IMR-90 (cell line): ENCODE measurements at regions of chr14 and their contacts with region 1.

Region 1: GRCh38 chr14:61553725-61554641 is 141.3 kb upstream of the HIF1A start:
- DNase-seq: peak; percentile 98
- ATAC-seq: peak; percentile 88
- H3K4me3 ChIP-seq: no peak overlapping the region
- H3K27ac ChIP-seq: peak overlapping the region; percentile 93
- H3K4me1 ChIP-seq: peaks cover 30% of the 10 kb centered on the region
- H3K27me3 ChIP-seq: no peaks in the 10 kb centered on the region
- CTCF ChIP-seq: no peak
- POLR2A ChIP-seq: no peak
- RAD21 ChIP-seq: peak; percentile 38

Region 2: GRCh38 chr14:60915781-60916180 is 638.2 kb before region 1 on chr14:
- CTCF ChIA-PET with region 1: no interaction called
- POLR2A ChIA-PET with region 1: no interaction called
- dilution Hi-C with region 1: no loop called
- in situ Hi-C with region 1: no loop called
- intact Hi-C with region 1: no loop called
- DNase-seq: peak; percentile 5
- ATAC-seq: peak; percentile 49; the same call in 1 of the 2 replicates
- H3K4me3 ChIP-seq: no peak overlapping the region
- H3K27ac ChIP-seq: no peak overlapping the region
- H3K4me1 ChIP-seq: no peaks in the 10 kb centered on the region
- H3K27me3 ChIP-seq: no peaks in the 10 kb centered on the region
- CTCF ChIP-seq: no peak
- POLR2A ChIP-seq: no peak
- RAD21 ChIP-seq: no peak

Region 3: DNA sequence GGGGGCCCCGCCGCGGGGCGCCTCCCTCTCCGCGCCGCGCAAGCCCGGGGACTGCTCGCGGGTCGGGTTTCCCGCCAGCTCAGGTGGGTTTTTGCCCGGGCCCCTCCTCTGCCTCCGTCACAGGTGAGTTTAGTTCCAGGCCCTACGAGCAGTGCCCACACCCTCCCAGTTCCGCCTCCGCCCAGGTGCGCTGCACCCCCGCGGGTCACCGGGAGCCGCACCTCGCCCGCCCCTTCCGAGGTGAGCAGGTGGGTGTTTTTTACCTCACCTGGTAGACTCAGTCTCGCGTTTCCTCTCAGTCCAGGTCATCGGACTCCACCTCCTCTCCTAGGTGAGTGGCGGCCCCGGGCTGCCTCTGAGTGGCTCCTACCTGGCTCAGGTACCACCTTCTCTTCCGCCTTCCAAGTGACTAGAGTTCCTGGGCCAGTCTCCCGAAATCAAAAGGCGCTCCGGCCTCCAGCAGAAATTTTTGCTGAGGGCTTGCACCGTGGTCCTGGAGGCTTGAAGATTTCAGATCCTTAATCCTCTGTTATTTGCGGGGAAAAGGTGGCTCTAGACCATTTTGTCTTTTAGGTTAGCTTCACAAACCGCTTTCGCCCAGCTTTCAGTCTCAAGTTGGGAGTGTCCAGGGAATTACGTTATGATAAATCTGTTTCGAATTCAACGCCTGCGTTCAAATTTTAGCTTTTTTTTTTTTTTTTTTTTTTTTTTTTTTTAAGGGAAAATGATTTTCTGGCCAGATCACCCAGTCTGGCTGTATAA is 272.6 kb before region 1 on chr14 and contains the start of gene TMEM30B:
- CTCF ChIA-PET with region 1: no interaction called
- POLR2A ChIA-PET with region 1: no interaction called
- dilution Hi-C with region 1: no loop called
- in situ Hi-C with region 1: no loop called
- intact Hi-C with region 1: no loop called
- DNase-seq: no peak
- ATAC-seq: no peak
- H3K4me3 ChIP-seq: peak within 1 kb of the TSS; percentile 22
- H3K27ac ChIP-seq: no peak within 1 kb of the TSS
- H3K4me1 ChIP-seq: no peaks in the 10 kb centered on the region
- H3K27me3 ChIP-seq: peaks cover 25% of the 10 kb centered on the region
- CTCF ChIP-seq: no peak
- POLR2A ChIP-seq: no peak
- RAD21 ChIP-seq: no peak
- total RNA-seq, gene TMEM30B: under 0.01 TPM in 1 of 2 replicates, not detected in the other

Region 4: GRCh38 chr14:61512026-61512834 is 41.8 kb before region 1 on chr14:
- CTCF ChIA-PET with region 1: no interaction called
- POLR2A ChIA-PET with region 1: no interaction called
- dilution Hi-C with region 1: no loop called
- in situ Hi-C with region 1: no loop called
- intact Hi-C with region 1: loop called (anchors 1 kb)
- DNase-seq: peak; percentile 51
- ATAC-seq: peak; percentile 60; the same call in 1 of the 2 replicates
- H3K4me3 ChIP-seq: no peak overlapping the region
- H3K27ac ChIP-seq: peak overlapping the region; percentile 85
- H3K4me1 ChIP-seq: peaks cover 21% of the 10 kb centered on the region
- H3K27me3 ChIP-seq: no peaks in the 10 kb centered on the region
- CTCF ChIP-seq: no peak
- POLR2A ChIP-seq: no peak
- RAD21 ChIP-seq: no peak

Region 5: GRCh38 chr14:61742371-61742770 is 188.4 kb after region 1 on chr14:
- CTCF ChIA-PET with region 1: interaction called, 10 read pairs
- POLR2A ChIA-PET with region 1: no interaction called
- dilution Hi-C with region 1: no loop called
- in situ Hi-C with region 1: no loop called
- intact Hi-C with region 1: no loop called
- DNase-seq: no peak
- ATAC-seq: no peak
- H3K4me3 ChIP-seq: no peak overlapping the region
- H3K27ac ChIP-seq: no peak overlapping the region
- H3K4me1 ChIP-seq: peaks cover 2% of the 10 kb centered on the region
- H3K27me3 ChIP-seq: no peaks in the 10 kb centered on the region
- CTCF ChIP-seq: no peak
- POLR2A ChIP-seq: no peak
- RAD21 ChIP-seq: no peak

Region 6: DNA sequence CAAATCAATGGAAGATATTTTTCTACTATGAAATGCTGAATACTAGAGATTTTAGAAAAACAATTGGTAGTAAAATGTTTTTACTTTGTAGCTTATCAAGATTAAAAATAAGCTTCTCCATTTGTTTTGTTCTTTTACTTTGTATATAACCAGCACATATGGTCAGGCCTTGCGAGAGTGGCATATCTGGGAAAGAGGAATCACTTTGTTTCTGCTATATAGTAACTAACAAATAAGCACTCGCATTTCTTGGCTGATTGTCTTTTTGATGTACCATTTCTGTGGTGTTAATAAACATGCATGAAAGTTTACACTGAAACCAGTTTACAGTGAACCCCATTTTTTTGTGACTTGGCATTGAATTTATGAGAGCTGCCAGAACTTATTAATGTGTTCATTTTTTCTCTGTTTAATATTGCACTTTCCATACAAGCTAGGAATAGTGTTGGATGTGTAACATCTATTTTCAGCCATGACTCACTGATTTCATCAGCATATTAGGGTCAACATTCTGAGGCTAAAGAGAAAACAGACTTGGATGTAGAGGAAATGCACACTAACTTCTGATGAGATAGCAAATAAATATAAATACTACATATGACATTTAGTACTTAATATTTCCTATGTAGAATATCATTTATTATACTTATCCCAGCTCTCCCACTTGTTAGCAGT is 855.8 kb after region 1 on chr14:
- CTCF ChIA-PET with region 1: no interaction called
- POLR2A ChIA-PET with region 1: no interaction called
- dilution Hi-C with region 1: no loop called
- in situ Hi-C with region 1: no loop called
- intact Hi-C with region 1: no loop called
- DNase-seq: peak; percentile 80
- ATAC-seq: peak; percentile 67
- H3K4me3 ChIP-seq: no peak overlapping the region
- H3K27ac ChIP-seq: no peak overlapping the region
- H3K4me1 ChIP-seq: 0 out of 2 replicates have a peak, but pooled peaks cover 2% of the 10 kb centered on the region
- H3K27me3 ChIP-seq: no peaks in the 10 kb centered on the region
- CTCF ChIP-seq: no peak
- POLR2A ChIP-seq: no peak
- RAD21 ChIP-seq: no peak